ENCODE measurements at regions of chr2 and their contacts with region 1.

Region 1: GRCh38 chr2:208072250-208072892 is 47.0 kb upstream of the PLEKHM3 start:
- DNase-seq: peak; percentile 60
- H3K4me3 ChIP-seq: no peak overlapping the region
- H3K27ac ChIP-seq: no peak overlapping the region
- H3K4me1 ChIP-seq: peaks cover 4% of the 10 kb centered on the region
- H3K27me3 ChIP-seq: no peaks in the 10 kb centered on the region
- CTCF ChIP-seq: peak; percentile 84

Region 2: DNA sequence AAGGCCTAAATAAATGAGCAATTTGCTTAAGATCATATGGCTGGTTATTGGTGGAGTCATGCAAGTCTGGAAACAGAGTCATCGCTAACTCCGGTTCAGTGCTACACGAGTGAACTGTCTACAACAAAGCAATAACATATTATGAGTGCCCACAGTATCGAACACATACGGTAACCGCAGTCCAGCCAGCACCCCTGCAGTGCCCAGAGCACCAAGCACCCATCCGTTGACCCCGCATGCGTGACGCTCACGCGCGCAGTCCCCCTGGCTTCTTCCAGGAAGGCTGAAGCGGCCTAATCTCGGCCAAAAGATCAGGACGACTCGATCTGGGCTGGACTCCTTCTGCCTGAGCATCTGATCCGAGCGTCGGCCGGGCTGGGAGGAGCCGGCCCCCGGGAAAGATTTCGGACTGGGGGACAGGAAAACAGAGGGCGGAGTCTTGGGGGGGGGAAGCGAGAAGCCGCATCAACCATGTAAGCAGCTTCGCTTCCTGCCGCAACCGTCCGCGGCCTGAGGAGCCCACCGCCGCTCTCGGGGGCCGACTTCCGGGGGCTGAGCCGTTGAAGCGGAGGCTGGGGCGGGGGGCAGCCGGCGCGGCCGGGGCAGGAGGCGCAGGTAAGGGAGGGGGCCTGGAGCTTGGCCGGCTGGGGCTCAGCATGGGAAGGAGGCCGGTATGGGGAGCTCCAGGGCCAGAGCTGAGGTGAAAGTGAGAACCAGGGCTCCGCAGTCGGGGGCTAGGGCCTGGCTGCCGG is 193.6 kb after region 1 on chr2 and contains the start of gene PIKFYVE:
- CTCF ChIA-PET with region 1: no interaction called
- POLR2A ChIA-PET with region 1: interaction called, 14 read pairs
- intact Hi-C with region 1: no loop called
- DNase-seq: peak; percentile 97
- H3K4me3 ChIP-seq: peak within 1 kb of the TSS; percentile 86
- H3K27ac ChIP-seq: peak within 1 kb of the TSS; percentile 89
- H3K4me1 ChIP-seq: peaks cover 17% of the 10 kb centered on the region
- H3K27me3 ChIP-seq: no peaks in the 10 kb centered on the region
- CTCF ChIP-seq: no peak
- total RNA-seq, gene PIKFYVE: 28.8 and 32.1 TPM in 2 replicates